ENCODE measurements at regions of chr12 and their contacts with region 1.

Region 1: DNA sequence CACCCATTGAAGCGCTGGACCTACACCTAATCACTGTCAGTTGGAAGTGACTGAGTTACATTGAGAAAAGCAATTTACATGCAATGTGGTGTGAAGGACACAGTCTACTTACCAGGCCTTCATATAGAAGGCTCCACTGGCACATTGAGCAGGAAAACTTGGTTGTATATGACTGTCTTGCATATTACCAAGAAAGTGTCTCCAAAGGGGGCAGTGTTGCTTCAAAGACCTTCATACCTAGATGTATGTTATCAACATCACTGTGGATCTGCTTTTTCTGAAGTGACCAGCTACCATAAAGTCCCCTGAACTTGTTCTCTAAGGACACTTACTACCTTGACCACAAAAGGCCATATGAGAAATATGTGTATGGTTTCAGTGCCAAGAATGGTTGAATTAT is 64.1 kb downstream of the NELL2 start:
- DNase-seq: peak in 6 of 9 experiments; percentile 19 to 86 (median 57)
- ATAC-seq: peak; percentile 83
- H3K4me3 ChIP-seq: no peak overlapping the region
- H3K4me3 Mint-ChIP-seq: no peak overlapping the region
- H3K27ac ChIP-seq: no peak overlapping the region
- H3K27ac Mint-ChIP-seq: peak overlapping the region; percentile 86
- H3K4me1 ChIP-seq: peaks cover 54% of the 10 kb centered on the region
- H3K4me1 Mint-ChIP-seq: peaks cover 64% of the 10 kb centered on the region
- H3K27me3 ChIP-seq: no peaks in the 10 kb centered on the region
- H3K27me3 Mint-ChIP-seq: no peaks in the 10 kb centered on the region
- CTCF ChIP-seq: peak; percentile 55

Region 2: DNA sequence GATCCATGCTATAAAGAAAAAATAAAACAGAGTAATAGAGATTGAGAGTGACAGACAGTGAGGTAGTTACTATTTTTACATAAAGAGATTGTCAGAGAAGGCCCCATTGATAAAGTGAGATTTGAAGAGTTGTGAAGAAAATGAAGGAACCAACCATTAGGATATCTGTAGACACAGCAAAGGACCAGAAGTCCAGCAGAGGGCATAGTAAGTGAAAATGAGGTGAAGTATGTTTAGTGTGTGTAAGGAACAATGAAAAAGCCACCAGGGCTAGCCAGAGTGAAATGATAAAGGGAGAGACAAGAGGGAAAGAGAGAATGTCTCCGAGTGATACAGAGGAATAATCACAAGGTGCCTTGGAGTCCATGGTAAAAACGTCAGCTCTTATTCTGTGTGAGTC is 346.9 kb before region 1 on chr12:
- CTCF ChIA-PET with region 1: no interaction called
- POLR2A ChIA-PET with region 1: no interaction called
- intact Hi-C with region 1: no loop called
- DNase-seq: peak in 1 of 9 experiments; percentile 4
- ATAC-seq: no peak
- H3K4me3 ChIP-seq: no peak overlapping the region
- H3K4me3 Mint-ChIP-seq: no peak overlapping the region
- H3K27ac ChIP-seq: no peak overlapping the region
- H3K27ac Mint-ChIP-seq: no peak overlapping the region
- H3K4me1 ChIP-seq: no peaks in the 10 kb centered on the region
- H3K4me1 Mint-ChIP-seq: no peaks in the 10 kb centered on the region
- H3K27me3 ChIP-seq: no peaks in the 10 kb centered on the region
- H3K27me3 Mint-ChIP-seq: no peaks in the 10 kb centered on the region
- CTCF ChIP-seq: no peak

Region 3: GRCh38 chr12:44759289-44759688 is 52.8 kb before region 1 on chr12:
- CTCF ChIA-PET with region 1: no interaction called
- POLR2A ChIA-PET with region 1: no interaction called
- intact Hi-C with region 1: no loop called
- DNase-seq: no peak
- ATAC-seq: no peak
- H3K4me3 ChIP-seq: no peak overlapping the region
- H3K4me3 Mint-ChIP-seq: no peak overlapping the region
- H3K27ac ChIP-seq: no peak overlapping the region
- H3K27ac Mint-ChIP-seq: no peak overlapping the region
- H3K4me1 ChIP-seq: peaks cover 13% of the 10 kb centered on the region
- H3K4me1 Mint-ChIP-seq: peaks cover 22% of the 10 kb centered on the region
- H3K27me3 ChIP-seq: no peaks in the 10 kb centered on the region
- H3K27me3 Mint-ChIP-seq: no peaks in the 10 kb centered on the region
- CTCF ChIP-seq: no peak

Region 4: DNA sequence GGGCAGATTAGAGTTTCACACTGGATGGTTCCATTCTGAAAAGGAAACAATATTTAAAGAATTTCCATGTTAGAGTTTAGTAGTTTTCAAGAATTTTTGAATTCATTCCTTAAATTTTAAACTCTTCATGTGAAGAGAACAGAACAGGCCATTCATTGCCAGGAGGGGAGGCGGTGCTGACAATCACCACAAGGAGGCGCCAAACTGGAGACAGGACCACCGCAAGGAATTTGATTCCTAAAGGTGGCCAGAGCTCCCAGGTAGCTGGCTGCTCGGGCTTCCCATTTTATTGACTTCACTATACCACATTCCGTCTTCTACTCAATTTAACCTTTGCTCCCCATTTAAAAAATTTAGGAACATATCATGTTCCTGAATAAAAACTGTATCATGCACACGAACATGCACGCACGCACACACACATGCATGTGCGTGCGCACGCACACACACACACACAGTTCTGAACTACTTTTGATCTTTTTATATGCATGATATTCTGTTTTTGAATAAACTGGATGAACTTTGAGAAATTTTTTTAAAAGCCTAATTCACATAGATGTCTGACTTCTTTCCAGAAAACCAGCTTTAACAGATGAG is 37.1 kb before region 1 on chr12:
- CTCF ChIA-PET with region 1: interaction called, 34 read pairs
- POLR2A ChIA-PET with region 1: no interaction called
- intact Hi-C with region 1: loop called (anchors 2 to 5 kb)
- DNase-seq: peak; percentile 37 to 81 (median 67)
- ATAC-seq: peak; percentile 58
- H3K4me3 ChIP-seq: no peak overlapping the region
- H3K4me3 Mint-ChIP-seq: no peak overlapping the region
- H3K27ac ChIP-seq: no peak overlapping the region
- H3K27ac Mint-ChIP-seq: no peak overlapping the region
- H3K4me1 ChIP-seq: no peaks in the 10 kb centered on the region
- H3K4me1 Mint-ChIP-seq: peaks cover 15% of the 10 kb centered on the region
- H3K27me3 ChIP-seq: no peaks in the 10 kb centered on the region
- H3K27me3 Mint-ChIP-seq: no peaks in the 10 kb centered on the region
- CTCF ChIP-seq: peak; percentile 93

Region 5: GRCh38 chr12:44842669-44843068 is 30.6 kb after region 1 on chr12:
- CTCF ChIA-PET with region 1: interaction called, 19 read pairs
- POLR2A ChIA-PET with region 1: interaction called, 9 read pairs
- intact Hi-C with region 1: loop called in 1 of 2 experiments (anchors 5 kb)
- DNase-seq: peak in 4 of 9 experiments; percentile 30 to 67 (median 38)
- ATAC-seq: peak; percentile 65
- H3K4me3 ChIP-seq: peak overlapping the region; percentile 23 to 43
- H3K4me3 Mint-ChIP-seq: peak overlapping the region; percentile 73
- H3K27ac ChIP-seq: peak overlapping the region; percentile 62 to 66
- H3K27ac Mint-ChIP-seq: peak overlapping the region; percentile 95
- H3K4me1 ChIP-seq: peaks cover 95% of the 10 kb centered on the region
- H3K4me1 Mint-ChIP-seq: peaks cover 87% of the 10 kb centered on the region
- H3K27me3 ChIP-seq: no peaks in the 10 kb centered on the region
- H3K27me3 Mint-ChIP-seq: no peaks in the 10 kb centered on the region
- CTCF ChIP-seq: no peak

Region 6: DNA sequence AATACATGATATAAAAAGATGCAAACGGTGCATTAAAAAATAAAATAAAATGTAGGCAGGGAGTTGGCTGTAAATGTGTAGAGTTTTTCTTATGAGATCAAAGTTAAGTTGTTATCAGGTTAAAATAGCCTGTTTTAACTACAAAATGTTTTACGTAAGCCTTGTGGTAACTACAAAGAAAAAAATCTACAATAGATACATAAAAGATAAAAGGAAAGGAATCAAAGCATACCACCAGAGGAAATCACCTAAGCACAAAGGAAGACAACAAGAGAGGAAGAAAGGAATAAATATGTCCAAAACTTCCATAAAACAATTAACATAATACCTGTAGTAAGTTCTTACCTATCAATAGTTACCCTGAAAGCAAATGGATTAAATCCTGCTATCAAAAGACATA is 51.8 kb after region 1 on chr12:
- CTCF ChIA-PET with region 1: interaction called, 151 read pairs
- POLR2A ChIA-PET with region 1: interaction called, 3 read pairs
- intact Hi-C with region 1: no loop called
- DNase-seq: peak in 2 of 9 experiments; percentile 53 to 74
- ATAC-seq: peak; percentile 74
- H3K4me3 ChIP-seq: no peak overlapping the region
- H3K4me3 Mint-ChIP-seq: no peak overlapping the region
- H3K27ac ChIP-seq: no peak overlapping the region
- H3K27ac Mint-ChIP-seq: peak overlapping the region; percentile 89
- H3K4me1 ChIP-seq: peaks cover 49% of the 10 kb centered on the region
- H3K4me1 Mint-ChIP-seq: peaks cover 65% of the 10 kb centered on the region
- H3K27me3 ChIP-seq: peaks cover 0 to 2% of the 10 kb centered on the region in 2 experiments
- H3K27me3 Mint-ChIP-seq: no peaks in the 10 kb centered on the region
- CTCF ChIP-seq: no peak